Adrenal gland (tissue), 19 donors: ENCODE measurements at regions of chr7 and their contacts with region 1.

Region 1: DNA sequence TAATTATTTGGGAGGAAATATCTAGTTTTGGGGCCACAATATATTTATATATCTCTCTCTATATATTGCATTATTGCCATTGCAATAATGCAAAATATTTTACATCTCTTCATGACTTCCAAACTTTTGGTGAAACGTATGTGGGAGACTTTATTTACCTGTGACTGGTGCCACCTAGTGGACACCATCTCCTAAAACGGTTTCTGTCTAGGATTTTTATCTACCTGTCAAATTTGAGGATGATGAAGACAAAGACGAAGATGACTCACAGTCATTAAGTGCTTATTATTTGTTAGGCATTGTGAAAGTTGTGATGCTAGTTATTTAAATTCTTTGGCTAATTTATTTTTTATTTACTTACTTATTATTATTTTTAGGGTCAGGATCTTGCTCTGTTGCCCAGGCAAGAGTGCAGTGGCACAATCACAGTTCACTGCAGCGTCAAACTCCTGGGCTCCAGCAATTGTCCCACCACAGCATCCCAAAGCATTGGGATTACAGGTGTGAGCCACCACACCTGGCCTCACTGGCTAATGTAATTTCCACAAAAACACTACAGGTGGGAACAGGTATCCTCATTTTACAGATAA is 18.7 kb upstream of the CBLL1 start:
- DNase-seq: peak; percentile 17 to 68 (median 42)
- H3K4me3 ChIP-seq: no peak overlapping the region
- H3K27ac ChIP-seq: no peak overlapping the region
- H3K4me1 ChIP-seq: no peaks in the 10 kb centered on the region
- H3K27me3 ChIP-seq: no peaks in the 10 kb centered on the region
- CTCF ChIP-seq: peak; percentile 57 to 82 (median 68)
- POLR2A ChIP-seq: no peak

Region 2: GRCh38 chr7:107201795-107202450 is 523.3 kb before region 1 on chr7:
- intact Hi-C with region 1: loop called in 1 of 2 experiments (anchors 10 kb)
- DNase-seq: peak in 6 of 7 donors; percentile 31 to 78 (median 42)
- H3K4me3 ChIP-seq: no peak overlapping the region
- H3K27ac ChIP-seq: no peak overlapping the region
- H3K4me1 ChIP-seq: peaks cover 4 to 9% of the 10 kb centered on the region in 2 donors
- H3K27me3 ChIP-seq: no peaks in the 10 kb centered on the region
- CTCF ChIP-seq: peak; percentile 8 to 55 (median 48)
- POLR2A ChIP-seq: no peak

Region 3: DNA sequence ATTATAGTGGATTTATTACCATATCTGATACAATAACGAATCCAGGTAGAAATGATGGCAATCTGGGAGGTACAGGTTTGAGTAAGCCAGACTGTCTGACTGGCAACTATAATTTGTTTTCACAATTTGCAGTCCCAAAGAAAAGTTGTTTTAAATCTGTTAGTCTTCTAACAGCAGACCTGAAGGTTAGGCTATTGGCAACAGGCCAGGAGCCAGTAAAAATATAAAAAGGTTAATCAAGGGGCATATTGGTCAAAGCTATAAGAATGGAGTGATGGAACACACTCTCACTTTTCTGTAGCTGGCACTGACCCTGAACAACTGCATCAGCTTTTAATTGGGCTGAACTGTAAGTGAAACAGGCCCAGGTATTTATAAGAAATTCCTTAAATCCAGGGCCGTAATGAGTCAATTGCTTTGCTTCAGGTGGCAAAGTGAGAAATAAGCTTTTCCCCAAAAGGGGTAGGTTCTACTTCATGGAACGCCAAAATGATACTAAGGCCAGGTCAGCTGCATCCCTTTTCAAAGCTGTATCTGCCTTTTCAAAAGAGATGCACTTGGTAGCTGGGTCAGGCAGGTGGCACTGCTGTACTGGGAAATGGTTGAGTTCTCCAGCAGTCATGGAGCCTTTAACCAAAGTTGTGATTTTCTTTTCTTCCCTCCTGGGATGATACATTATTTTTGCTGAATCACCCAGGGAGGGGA is 262.4 kb before region 1 on chr7:
- intact Hi-C with region 1: loop called (anchors 5 to 10 kb)
- DNase-seq: peak; percentile 51 to 85 (median 66)
- H3K4me3 ChIP-seq: no peak overlapping the region
- H3K27ac ChIP-seq: no peak overlapping the region
- H3K4me1 ChIP-seq: no peaks in the 10 kb centered on the region
- H3K27me3 ChIP-seq: no peaks in the 10 kb centered on the region
- CTCF ChIP-seq: peak; percentile 50 to 88 (median 82)
- POLR2A ChIP-seq: no peak

Region 4: GRCh38 chr7:107614425-107614824 is 110.8 kb before region 1 on chr7:
- intact Hi-C with region 1: no loop called
- DNase-seq: no peak
- H3K4me3 ChIP-seq: no peak overlapping the region
- H3K27ac ChIP-seq: no peak overlapping the region
- H3K4me1 ChIP-seq: peaks cover 0 to 13% of the 10 kb centered on the region in 2 donors
- H3K27me3 ChIP-seq: no peaks in the 10 kb centered on the region
- CTCF ChIP-seq: no peak
- POLR2A ChIP-seq: no peak

Region 5: DNA sequence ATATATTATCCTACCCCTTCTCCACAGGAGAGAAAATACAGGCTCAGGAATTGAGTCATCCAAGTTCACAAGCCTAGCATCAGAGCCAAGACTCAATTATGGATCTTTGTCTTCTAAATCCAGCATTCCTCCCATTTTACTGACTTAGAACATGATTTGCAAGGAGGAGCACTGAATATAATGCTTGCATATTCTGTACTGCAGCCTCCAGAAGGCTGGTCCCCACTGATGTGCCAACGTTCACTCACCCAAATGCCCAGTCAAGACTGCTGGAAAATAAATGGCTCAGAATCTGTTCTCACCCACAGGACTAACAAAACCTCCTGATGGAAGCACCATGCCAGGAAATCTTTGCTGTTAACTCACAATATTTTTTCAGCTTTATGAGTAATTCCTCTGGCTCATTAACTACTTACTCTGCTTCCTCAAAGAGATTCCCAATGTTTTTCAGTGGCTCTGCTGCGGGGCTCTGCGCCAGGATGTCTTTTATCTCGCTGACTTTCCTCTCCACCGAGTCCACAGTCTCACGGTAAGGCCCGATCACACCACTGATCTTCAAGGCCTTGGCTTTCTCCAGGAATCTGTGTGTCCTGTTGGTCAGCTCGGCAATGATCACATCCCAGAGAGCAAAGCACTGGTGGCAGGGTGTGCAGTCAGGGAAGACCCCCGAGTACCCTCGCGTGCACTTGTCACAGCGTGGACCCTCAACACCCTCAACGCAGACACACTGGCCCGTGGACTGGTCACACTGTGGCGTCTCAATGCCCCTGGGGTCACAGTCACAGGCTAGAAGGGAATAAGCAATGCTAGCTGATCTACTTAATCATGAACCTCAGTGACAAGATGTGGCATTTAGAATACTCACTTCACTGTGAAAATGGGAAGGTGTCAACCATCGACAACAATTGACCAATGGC is 214.6 kb after region 1 on chr7:
- intact Hi-C with region 1: no loop called
- DNase-seq: peak in 6 of 7 donors; percentile 67 to 86 (median 69)
- H3K4me3 ChIP-seq: no peak overlapping the region
- H3K27ac ChIP-seq: peak overlapping the region; percentile 1 to 85 (median 57)
- H3K4me1 ChIP-seq: peaks cover 8 to 27% of the 10 kb centered on the region in 2 donors
- H3K27me3 ChIP-seq: no peaks in the 10 kb centered on the region
- CTCF ChIP-seq: no peak
- POLR2A ChIP-seq: no peak